ENCODE measurements at regions of chr14 and their contacts with region 1.

Region 1: GRCh38 chr14:91418387-91419043 is 895 bp upstream of the CCDC88C start:
- DNase-seq: peak; percentile 75
- H3K4me3 Mint-ChIP-seq: peak overlapping the region; percentile 67
- H3K27ac Mint-ChIP-seq: peak overlapping the region; percentile 85
- H3K4me1 Mint-ChIP-seq: peaks cover 36% of the 10 kb centered on the region
- H3K27me3 Mint-ChIP-seq: no peaks in the 10 kb centered on the region

Region 2: GRCh38 chr14:91228112-91229004 is 190.2 kb before region 1 on chr14:
- intact Hi-C with region 1: loop called (anchors 2 kb)
- DNase-seq: peak; percentile 76
- H3K4me3 Mint-ChIP-seq: peak overlapping the region; percentile 75
- H3K27ac Mint-ChIP-seq: peak overlapping the region; percentile 100
- H3K4me1 Mint-ChIP-seq: peaks cover 80% of the 10 kb centered on the region
- H3K27me3 Mint-ChIP-seq: no peaks in the 10 kb centered on the region

Region 3: DNA sequence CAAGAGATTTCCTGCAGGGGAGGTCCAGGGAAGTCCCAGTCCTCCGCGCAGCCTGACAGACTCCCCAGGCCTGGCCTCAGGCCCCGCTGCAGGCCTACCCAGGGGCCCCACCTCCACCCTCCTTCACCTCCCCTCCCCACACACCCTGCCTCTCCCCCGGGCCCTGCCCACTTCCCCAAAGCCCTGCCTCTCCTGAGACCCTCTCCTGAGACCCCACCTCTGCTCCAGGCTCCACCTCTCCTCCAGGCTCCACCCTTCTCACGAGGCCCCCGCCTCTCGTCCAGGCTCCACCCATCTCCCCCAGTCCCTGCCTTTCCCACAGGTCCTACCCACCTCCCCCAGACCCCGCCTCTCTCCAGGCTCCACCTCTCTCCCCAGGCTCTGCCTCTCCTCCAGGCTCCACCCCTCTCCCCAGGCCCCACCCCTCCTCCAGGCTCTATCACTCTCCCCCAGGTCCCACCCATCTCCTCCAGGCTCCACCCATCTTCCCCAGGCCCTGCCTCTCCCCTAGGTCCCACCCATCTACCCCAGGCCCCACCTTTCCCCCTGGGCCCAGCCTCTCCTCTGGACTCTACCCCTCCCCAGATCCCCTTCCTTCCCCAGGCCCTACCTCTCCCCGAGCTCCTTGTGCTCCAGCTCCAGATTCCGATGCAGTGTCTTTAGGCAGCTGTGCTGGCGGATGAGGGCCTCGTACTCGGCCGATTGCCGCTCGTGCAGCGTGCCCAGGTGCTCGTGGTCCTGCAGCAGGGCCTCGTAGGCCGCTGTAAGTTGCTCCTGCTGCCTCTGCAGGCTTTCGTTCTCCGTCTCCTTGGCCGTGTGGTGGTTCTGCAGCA is 115.2 kb before region 1 on chr14:
- intact Hi-C with region 1: loop called (anchors 5 kb)
- DNase-seq: peak; percentile 56
- H3K4me3 Mint-ChIP-seq: peak overlapping the region; percentile 27
- H3K27ac Mint-ChIP-seq: peak overlapping the region; percentile 97
- H3K4me1 Mint-ChIP-seq: peaks cover 46% of the 10 kb centered on the region
- H3K27me3 Mint-ChIP-seq: no peaks in the 10 kb centered on the region

Region 4: GRCh38 chr14:91323671-91324605 is 94.6 kb before region 1 on chr14:
- intact Hi-C with region 1: loop called (anchors 1 kb)
- DNase-seq: peak; percentile 84
- H3K4me3 Mint-ChIP-seq: peak overlapping the region; percentile 75
- H3K27ac Mint-ChIP-seq: peak overlapping the region; percentile 99
- H3K4me1 Mint-ChIP-seq: peaks cover 47% of the 10 kb centered on the region
- H3K27me3 Mint-ChIP-seq: no peaks in the 10 kb centered on the region

Region 5: DNA sequence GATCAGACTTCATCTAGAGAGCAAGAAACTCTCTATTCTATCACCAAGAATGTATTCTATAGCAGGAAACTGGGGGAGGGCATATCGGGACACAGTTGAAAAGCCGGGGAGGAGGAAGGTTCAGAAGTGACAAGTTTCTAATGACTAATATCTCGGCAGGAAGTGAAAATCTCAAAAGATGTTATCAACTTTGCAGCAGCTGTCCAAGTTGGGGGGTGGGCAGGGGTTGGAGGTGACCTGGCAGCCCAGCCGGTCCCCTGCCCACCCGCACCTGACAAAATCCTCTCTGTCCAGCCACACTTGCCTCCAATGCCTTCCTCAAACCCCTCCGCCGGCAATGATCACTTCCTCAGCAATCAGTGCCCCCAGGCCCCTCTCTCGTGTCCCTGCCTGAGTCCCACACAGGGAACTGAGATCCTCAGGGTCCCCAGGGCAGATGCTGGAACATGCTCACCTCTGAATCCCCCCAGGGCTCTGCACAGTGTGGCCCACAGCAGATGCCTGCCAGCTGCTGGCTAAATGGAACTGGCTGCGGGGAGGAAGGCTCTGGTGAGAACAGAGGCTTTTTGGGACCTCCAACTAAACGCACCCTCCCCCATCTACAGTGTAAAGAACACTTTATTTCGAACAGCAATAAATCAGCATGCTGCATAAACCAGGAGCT is 44.8 kb before region 1 on chr14:
- intact Hi-C with region 1: loop called (anchors 1 kb)
- DNase-seq: peak; percentile 55
- H3K4me3 Mint-ChIP-seq: peak overlapping the region; percentile 77
- H3K27ac Mint-ChIP-seq: peak overlapping the region; percentile 95
- H3K4me1 Mint-ChIP-seq: peaks cover 93% of the 10 kb centered on the region
- H3K27me3 Mint-ChIP-seq: no peaks in the 10 kb centered on the region

Region 6: DNA sequence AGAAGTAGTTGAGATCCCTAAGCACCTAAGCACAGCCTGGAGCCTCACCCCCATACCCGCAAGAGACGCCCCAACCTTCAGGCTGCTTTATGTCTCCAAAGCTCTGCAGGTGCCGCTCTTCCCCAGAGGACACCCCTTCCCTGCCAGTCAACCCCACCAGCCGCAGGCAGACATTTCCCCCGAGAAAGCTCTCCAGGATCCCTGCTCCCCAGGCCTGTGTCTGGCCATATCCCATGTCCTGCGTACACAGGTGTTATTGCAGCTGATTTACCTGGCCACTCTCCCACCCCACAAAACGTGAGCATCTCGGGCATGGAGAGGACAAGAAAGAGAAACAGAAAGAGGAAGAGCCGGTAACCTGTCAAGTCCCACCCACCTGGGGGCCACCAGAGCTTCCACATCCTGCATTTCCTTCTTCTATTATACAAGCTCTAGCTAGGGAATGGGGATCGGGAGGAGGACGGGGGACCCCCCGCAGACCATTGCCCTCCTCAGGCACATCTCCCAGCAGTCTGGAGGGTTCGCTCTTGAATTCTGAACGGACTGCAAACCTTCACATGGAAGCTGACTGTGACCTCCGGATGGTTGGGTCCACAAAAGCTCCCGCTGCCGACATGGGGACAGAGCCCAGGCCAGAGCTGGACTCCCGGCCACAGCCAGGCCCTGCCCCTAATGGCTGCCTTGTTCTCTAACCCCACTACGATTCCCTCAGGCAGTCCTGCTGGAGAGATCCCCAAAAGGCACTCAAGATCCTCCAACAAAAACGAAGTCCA is 18.5 kb before region 1 on chr14:
- intact Hi-C with region 1: no loop called
- DNase-seq: peak; percentile 37
- H3K4me3 Mint-ChIP-seq: peak overlapping the region; percentile 95
- H3K27ac Mint-ChIP-seq: peak overlapping the region; percentile 80
- H3K4me1 Mint-ChIP-seq: peaks cover 72% of the 10 kb centered on the region
- H3K27me3 Mint-ChIP-seq: no peaks in the 10 kb centered on the region

Region 7: DNA sequence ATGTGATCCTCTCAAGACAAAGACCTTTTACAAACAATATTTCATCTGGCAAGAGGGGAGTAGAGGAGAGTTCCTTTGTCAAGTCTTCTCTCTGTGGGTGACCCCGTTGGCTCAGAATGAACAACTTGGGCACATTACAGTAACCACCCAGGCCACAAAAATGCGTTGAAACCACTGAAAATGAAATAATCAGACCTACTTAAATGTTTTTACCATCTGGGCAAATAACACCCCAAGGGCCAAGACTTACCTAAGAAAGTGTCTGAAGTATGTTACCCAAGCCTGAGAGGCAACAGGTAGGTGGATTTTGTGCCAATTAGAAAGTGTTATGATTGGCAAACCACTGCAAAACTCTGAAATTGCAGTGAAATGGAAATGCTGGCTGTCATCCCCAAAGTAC is 447.5 kb after region 1 on chr14:
- intact Hi-C with region 1: loop called (anchors 10 kb)
- DNase-seq: no peak
- H3K4me3 Mint-ChIP-seq: peak overlapping the region; percentile 89
- H3K27ac Mint-ChIP-seq: peak overlapping the region; percentile 95
- H3K4me1 Mint-ChIP-seq: peaks cover 84% of the 10 kb centered on the region
- H3K27me3 Mint-ChIP-seq: no peaks in the 10 kb centered on the region

Measured in activated T-helper 2 cell treated with anti-CD3 and anti-CD28 coated beads, Interferon-gamma antibody, Interleukin-2, Interleukin-4, amounts not matched to agents 10 μg/mL and 5 μg/mL and 100 μg/mL, durations not matched to agents 14 hours and 24 hours and 36 hours (primary cell).